CD4-positive, alpha-beta memory T cell (primary cell): ENCODE measurements at regions of chr7 and their contacts with region 1.

Region 1: DNA sequence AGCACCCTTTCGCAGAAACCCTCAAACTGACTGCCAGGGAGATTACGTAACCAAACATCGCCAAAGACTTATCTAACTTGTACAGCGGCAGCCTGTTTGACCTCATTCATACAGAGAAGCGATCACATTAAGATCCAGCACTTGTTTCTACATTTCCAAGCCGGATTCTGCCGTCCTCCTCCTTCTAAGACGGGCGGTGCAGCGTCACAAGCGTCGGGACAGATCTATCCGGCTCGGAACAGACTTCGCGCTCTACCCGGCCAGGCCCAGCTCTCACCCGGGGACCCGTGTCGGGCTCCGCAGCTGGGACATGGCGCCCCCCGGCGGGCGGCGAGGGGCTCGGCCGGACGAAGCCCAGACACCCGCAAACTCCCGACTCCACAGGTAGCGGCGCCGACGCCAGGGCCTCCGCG is 373 bp downstream of the H2AZ2 start:
- DNase-seq: peak; percentile 91 to 93 (median 92)
- H3K4me3 ChIP-seq: peak overlapping the region; percentile 49 to 62
- H3K4me3 Mint-ChIP-seq: peak overlapping the region; percentile 87 to 98 (median 96)
- H3K27ac ChIP-seq: peak overlapping the region; percentile 90
- H3K27ac Mint-ChIP-seq: peak overlapping the region; percentile 97 to 100 (median 100)
- H3K4me1 ChIP-seq: peaks cover 29% of the 10 kb centered on the region
- H3K4me1 Mint-ChIP-seq: peaks cover 18 to 46% (median 25%) of the 10 kb centered on the region in 4 donors
- H3K27me3 ChIP-seq: no peaks in the 10 kb centered on the region
- H3K27me3 Mint-ChIP-seq: peaks cover 0 to 1% of the 10 kb centered on the region in 2 donors

Region 2: GRCh38 chr7:44581879-44582603 is 265.5 kb before region 1 on chr7 and contains the start of gene TMED4:
- CTCF ChIA-PET with region 1: interaction called, 34 read pairs
- POLR2A ChIA-PET with region 1: interaction called, 50 read pairs
- intact Hi-C with region 1: loop called (anchors 1 kb)
- DNase-seq: peak; percentile 100
- H3K4me3 ChIP-seq: peak within 1 kb of the TSS; percentile 79 to 98
- H3K4me3 Mint-ChIP-seq: peak within 1 kb of the TSS; percentile 90 to 95 (median 92)
- H3K27ac ChIP-seq: peak within 1 kb of the TSS; percentile 89
- H3K27ac Mint-ChIP-seq: peak within 1 kb of the TSS; percentile 97 to 99 (median 98)
- H3K4me1 ChIP-seq: peaks cover 34% of the 10 kb centered on the region
- H3K4me1 Mint-ChIP-seq: peaks cover 18 to 44% (median 32%) of the 10 kb centered on the region in 4 donors
- H3K27me3 ChIP-seq: no peaks in the 10 kb centered on the region
- H3K27me3 Mint-ChIP-seq: no peaks in the 10 kb centered on the region
- total RNA-seq, gene TMED4: 108 to 110 TPM

Region 3: GRCh38 chr7:44638611-44639557 is 208.6 kb before region 1 on chr7:
- CTCF ChIA-PET with region 1: interaction called, 3 read pairs
- POLR2A ChIA-PET with region 1: interaction called, 37 read pairs
- intact Hi-C with region 1: loop called (anchors 2 kb)
- DNase-seq: peak; percentile 72 to 91 (median 79)
- H3K4me3 ChIP-seq: peak overlapping the region; percentile 0 to 48
- H3K4me3 Mint-ChIP-seq: peak overlapping the region; percentile 32 to 95 (median 90)
- H3K27ac ChIP-seq: peak overlapping the region; percentile 96
- H3K27ac Mint-ChIP-seq: peak overlapping the region; percentile 97 to 100 (median 100)
- H3K4me1 ChIP-seq: peaks cover 90% of the 10 kb centered on the region
- H3K4me1 Mint-ChIP-seq: peaks cover 57 to 87% (median 79%) of the 10 kb centered on the region in 4 donors
- H3K27me3 ChIP-seq: no peaks in the 10 kb centered on the region
- H3K27me3 Mint-ChIP-seq: no peaks in the 10 kb centered on the region

Region 4: DNA sequence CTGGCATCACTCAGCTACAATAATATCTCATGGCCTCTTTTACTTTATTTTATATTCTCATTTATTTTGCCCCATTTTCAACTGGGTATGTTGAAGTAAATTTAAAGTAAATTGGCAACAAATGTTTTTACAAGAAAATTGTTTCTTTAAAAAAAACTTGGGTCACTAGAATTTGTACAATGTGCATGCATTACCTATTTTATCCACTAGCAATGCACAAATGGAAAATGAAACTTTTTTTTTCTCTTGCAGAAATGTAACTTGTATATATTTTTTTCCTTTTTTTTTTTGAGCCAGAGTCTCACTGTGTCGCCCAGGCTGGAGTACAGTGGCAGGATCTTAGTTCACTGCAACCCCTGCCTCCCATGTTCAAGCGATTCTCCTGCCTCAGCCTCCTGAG is 10.6 kb after region 1 on chr7:
- CTCF ChIA-PET with region 1: interaction called, 21 read pairs
- POLR2A ChIA-PET with region 1: interaction called, 12 read pairs
- intact Hi-C with region 1: no loop called
- DNase-seq: no peak
- H3K4me3 ChIP-seq: no peak overlapping the region
- H3K4me3 Mint-ChIP-seq: no peak overlapping the region
- H3K27ac ChIP-seq: no peak overlapping the region
- H3K27ac Mint-ChIP-seq: peak overlapping the region in 1 of 7 donors; percentile 24
- H3K4me1 ChIP-seq: peaks cover 5% of the 10 kb centered on the region
- H3K4me1 Mint-ChIP-seq: peaks cover 3 to 6% (median 4%) of the 10 kb centered on the region in 4 donors
- H3K27me3 ChIP-seq: no peaks in the 10 kb centered on the region
- H3K27me3 Mint-ChIP-seq: peaks cover 0 to 7% of the 10 kb centered on the region in 2 donors

Region 5: GRCh38 chr7:44936322-44936721 is 88.8 kb after region 1 on chr7:
- CTCF ChIA-PET with region 1: no interaction called
- POLR2A ChIA-PET with region 1: no interaction called
- intact Hi-C with region 1: no loop called
- DNase-seq: no peak
- H3K4me3 ChIP-seq: no peak overlapping the region
- H3K4me3 Mint-ChIP-seq: no peak overlapping the region
- H3K27ac ChIP-seq: no peak overlapping the region
- H3K27ac Mint-ChIP-seq: no peak overlapping the region
- H3K4me1 ChIP-seq: no peaks in the 10 kb centered on the region
- H3K4me1 Mint-ChIP-seq: no peaks in the 10 kb centered on the region
- H3K27me3 ChIP-seq: no peaks in the 10 kb centered on the region
- H3K27me3 Mint-ChIP-seq: peaks cover 4% of the 10 kb centered on the region in 2 donors

Region 6: GRCh38 chr7:44999245-45000095 is 152.0 kb after region 1 on chr7:
- CTCF ChIA-PET with region 1: no interaction called
- POLR2A ChIA-PET with region 1: no interaction called
- intact Hi-C with region 1: loop called (anchors 1 kb)
- DNase-seq: peak; percentile 98 to 99 (median 99)
- H3K4me3 ChIP-seq: peak overlapping the region; percentile 18 to 60
- H3K4me3 Mint-ChIP-seq: peak overlapping the region; percentile 94 to 99 (median 96)
- H3K27ac ChIP-seq: peak overlapping the region; percentile 74
- H3K27ac Mint-ChIP-seq: peak overlapping the region; percentile 94 to 99 (median 97)
- H3K4me1 ChIP-seq: peaks cover 66% of the 10 kb centered on the region
- H3K4me1 Mint-ChIP-seq: peaks cover 38 to 63% (median 51%) of the 10 kb centered on the region in 4 donors
- H3K27me3 ChIP-seq: no peaks in the 10 kb centered on the region
- H3K27me3 Mint-ChIP-seq: no peaks in the 10 kb centered on the region